Activated CD8-positive, alpha-beta T cell treated with anti-CD3 and anti-CD28 coated beads, Interleukin-2, amount 10 ng/mL, durations not matched to agents 7 days and 5 days (primary cell): ENCODE measurements at regions of chr5 and their contacts with region 1.

Region 1: GRCh38 chr5:170059221-170059620 is 46.5 kb upstream of the FOXI1 start:
- DNase-seq: no peak
- ATAC-seq: no peak
- H3K4me3 Mint-ChIP-seq: no peak overlapping the region
- H3K27ac Mint-ChIP-seq: no peak overlapping the region
- H3K4me1 Mint-ChIP-seq: no peaks in the 10 kb centered on the region
- H3K27me3 Mint-ChIP-seq: no peaks in the 10 kb centered on the region

Region 2: DNA sequence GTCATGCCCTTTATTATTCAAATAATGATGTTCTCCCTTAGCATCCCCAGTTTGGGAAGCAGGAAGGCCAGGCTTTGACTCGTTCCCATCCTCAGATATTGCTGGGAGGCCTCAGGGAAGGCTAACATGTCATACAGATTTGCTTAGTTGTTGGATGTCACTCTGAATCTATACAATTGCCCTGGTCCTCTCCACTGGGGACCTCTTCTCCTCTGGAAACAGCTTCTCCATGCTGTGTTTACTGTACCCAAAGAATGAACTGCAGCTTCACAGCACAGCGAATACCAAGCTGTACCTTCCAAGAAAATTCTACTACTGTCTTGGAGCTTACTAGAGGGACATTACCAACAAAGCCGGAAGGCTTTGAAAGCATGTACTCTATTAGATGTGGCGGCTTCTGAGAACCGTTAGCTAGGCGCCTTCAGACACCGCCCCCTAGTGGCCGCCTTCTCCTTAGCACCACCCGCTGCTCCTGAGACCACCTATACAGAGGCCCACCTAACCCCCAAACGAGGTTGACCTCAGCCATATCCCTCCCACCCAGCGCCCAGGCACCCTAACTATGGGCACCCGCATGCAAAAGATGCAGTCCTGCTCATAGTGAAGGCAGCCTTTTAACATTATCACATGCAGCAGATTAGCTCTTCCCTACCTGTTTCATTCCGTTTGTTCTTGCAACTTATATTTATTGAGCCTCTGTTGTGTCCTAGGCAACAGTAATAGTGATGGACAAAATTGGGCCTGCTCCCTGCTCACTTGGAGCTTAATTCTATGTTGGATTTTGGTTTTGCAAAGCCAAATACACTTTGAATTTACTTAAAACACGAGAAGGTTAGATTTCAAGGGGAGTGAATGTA is 11.6 kb after region 1 on chr5:
- CTCF ChIA-PET with region 1: interaction called, 17 read pairs
- POLR2A ChIA-PET with region 1: no interaction called
- DNase-seq: peak; percentile 43
- ATAC-seq: peak; percentile 36
- H3K4me3 Mint-ChIP-seq: no peak overlapping the region
- H3K27ac Mint-ChIP-seq: no peak overlapping the region
- H3K4me1 Mint-ChIP-seq: no peaks in the 10 kb centered on the region
- H3K27me3 Mint-ChIP-seq: no peaks in the 10 kb centered on the region